Transverse colon (tissue), 4 donors: ENCODE measurements at regions of chr7 and their contacts with region 1.

Region 1: DNA sequence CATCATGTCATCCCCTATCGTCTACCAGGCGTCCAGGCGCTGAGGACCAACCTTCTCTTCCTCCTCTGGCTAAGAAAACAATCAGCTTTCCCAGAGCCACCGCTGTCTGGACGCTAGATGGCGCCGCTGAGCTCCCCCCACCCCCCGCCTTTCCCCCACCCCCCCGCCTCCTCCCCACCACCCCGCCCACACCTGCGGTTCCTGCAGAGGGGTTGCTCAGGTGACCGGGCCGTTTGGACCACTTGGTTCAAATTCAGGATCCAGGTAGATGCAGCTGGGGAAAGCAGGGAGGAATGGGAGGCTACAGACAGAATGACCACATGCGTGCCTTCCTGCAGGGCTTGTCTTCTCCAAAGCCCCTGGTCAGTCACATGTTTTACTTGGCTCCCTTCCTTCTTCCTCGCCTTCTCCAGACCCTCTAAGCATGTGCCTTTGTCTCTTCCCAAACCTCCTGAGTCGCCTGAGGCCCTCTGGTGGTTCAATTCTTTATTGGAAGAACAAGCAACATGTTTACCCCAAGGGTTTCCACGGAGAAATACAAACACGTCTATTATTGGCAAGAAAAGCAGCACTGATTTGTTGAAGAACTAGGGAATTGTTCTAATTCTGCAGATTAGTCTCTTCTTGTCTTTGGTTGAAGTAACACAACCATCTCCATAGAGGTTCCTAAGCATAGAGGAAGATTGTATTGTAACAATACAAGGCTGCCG is 24.7 kb downstream of the AOC1 start:
- DNase-seq: peak; percentile 66
- H3K4me3 ChIP-seq: no peak overlapping the region
- H3K27ac ChIP-seq: peak overlapping the region; percentile 9 to 41 (median 23)
- H3K4me1 ChIP-seq: peaks cover 0 to 12% (median 4%) of the 10 kb centered on the region in 4 donors
- H3K27me3 ChIP-seq: no peaks in the 10 kb centered on the region
- CTCF ChIP-seq: peak; percentile 39 to 73 (median 58)
- EP300 ChIP-seq: no peak
- POLR2A ChIP-seq: no peak

Region 2: DNA sequence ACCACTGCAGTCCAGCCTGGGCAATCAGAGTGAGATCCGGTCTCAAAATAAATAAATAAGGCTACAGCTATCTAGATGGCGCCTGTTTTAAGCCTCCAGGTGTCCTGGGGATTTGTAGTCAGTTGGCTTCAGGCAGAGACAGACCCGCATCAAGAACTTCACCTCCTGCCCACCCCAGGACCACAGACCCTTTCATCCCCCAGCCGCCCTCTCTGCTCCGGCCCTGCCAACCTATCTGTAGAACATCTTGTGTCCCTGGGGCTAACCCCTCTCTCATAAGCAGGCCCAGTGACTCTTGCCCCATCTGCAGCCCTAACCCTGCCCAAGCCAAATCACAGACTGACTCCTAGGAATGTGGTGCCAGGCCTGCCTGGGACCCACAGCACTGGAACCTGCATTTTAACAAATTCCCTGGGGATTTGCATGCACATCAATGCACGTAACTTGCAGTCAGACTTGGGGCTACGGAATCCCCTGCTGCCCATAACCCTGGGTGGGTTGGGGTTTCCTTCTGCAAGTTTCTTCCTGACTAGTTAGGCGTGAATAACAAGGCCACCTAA is 1866.4 kb before region 1 on chr7:
- in situ Hi-C with region 1: no loop called
- intact Hi-C with region 1: loop called (anchors 5 kb)
- DNase-seq: no peak
- H3K4me3 ChIP-seq: no peak overlapping the region
- H3K27ac ChIP-seq: no peak overlapping the region
- H3K4me1 ChIP-seq: no peaks in the 10 kb centered on the region
- H3K27me3 ChIP-seq: no peaks in the 10 kb centered on the region
- CTCF ChIP-seq: no peak
- EP300 ChIP-seq: no peak
- POLR2A ChIP-seq: no peak

Region 3: GRCh38 chr7:150778738-150779301 is 98.2 kb before region 1 on chr7:
- in situ Hi-C with region 1: loop called in 2 of 4 experiments (anchors 5 to 10 kb)
- intact Hi-C with region 1: loop called (anchors 10 kb)
- DNase-seq: peak; percentile 91
- H3K4me3 ChIP-seq: no peak overlapping the region
- H3K27ac ChIP-seq: peak overlapping the region in 3 of 4 donors; percentile 28 to 35 (median 32)
- H3K4me1 ChIP-seq: peaks cover 3 to 42% (median 12%) of the 10 kb centered on the region in 4 donors
- H3K27me3 ChIP-seq: no peaks in the 10 kb centered on the region
- CTCF ChIP-seq: peak; percentile 88 to 95 (median 89)
- EP300 ChIP-seq: no peak
- POLR2A ChIP-seq: no peak

Region 4: DNA sequence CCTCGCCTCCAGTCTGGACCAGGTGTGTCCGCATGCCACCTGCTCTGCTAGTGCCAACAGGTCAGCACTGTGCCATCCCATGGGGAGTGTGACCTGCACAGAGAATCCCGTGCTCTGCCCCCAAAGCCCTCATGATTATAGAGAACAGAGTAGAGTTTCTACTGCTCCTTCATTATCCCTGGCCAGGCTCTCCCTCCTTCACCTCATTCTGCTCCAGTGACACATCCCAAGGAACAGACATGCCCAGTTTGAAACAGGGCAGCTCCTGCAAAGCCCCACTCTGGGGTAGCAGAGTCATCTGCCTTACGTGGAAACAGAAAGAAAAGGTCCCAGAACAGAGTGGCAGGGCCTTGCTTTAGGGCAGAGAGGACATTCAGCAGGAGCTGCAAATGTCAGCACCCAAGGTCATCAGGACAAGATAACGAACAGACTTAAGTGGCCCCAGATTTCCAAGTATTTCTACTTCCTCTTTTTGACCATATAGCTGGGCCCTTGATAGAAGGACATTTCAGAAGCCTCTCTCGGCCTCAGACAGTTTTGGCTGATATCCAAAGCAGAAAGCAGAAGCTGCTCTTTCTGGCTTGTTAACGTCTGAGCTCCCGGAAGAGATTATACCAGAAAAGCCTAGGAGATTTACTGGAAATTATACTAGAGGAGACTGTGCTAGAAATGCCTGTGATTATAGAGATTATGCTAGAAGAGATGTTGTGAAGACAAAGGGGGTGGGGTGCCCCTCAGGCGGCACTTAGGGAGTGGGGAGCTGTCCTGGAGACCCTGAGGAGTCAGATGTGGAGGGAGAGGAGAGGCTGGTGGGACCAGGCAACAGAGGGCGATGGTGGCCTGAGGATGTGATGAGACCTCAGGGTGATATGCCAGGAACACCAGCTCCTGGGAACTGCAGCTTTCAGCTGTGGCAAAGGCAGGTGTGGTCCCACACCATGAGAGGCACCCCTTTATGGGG is 89.4 kb before region 1 on chr7:
- in situ Hi-C with region 1: no loop called
- intact Hi-C with region 1: loop called (anchors 10 kb)
- DNase-seq: no peak
- H3K4me3 ChIP-seq: no peak overlapping the region
- H3K27ac ChIP-seq: peak overlapping the region; percentile 83 to 89 (median 86)
- H3K4me1 ChIP-seq: peaks cover 26 to 71% (median 49%) of the 10 kb centered on the region in 4 donors
- H3K27me3 ChIP-seq: no peaks in the 10 kb centered on the region
- CTCF ChIP-seq: no peak
- EP300 ChIP-seq: no peak
- POLR2A ChIP-seq: no peak

Region 5: DNA sequence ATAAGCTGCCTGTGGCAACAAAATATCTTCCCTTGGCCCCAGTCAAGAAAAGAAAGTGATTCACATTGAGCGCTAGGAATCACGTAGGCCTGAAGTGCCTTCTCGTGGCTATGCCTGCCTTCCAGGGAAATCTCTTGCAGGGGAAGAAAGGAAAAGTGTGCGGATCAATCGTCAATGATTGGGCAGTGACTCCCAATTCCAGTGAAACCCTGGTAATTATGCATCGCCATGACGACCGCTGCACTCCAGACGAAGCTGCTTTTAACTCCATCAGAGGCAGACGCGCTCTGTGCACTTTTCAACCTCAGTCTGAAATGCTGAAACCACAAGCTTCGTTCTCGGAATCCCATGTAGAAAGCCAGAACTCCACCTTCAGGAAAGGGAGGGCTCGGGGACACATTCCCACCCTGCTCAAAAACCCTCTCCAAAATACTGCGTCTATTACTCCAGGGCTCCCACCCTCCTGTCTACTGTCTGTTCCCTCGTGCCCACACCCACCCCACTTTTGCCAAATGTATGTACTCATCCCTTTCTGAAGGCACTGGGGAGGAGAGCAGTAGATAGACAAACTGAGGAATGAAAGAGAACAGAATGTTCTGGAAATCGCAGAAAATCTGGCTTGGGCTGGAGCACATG is 1024.1 kb after region 1 on chr7:
- in situ Hi-C with region 1: no loop called
- intact Hi-C with region 1: no loop called
- DNase-seq: no peak
- H3K4me3 ChIP-seq: no peak overlapping the region
- H3K27ac ChIP-seq: no peak overlapping the region
- H3K4me1 ChIP-seq: peaks cover 3 to 14% (median 9%) of the 10 kb centered on the region in 4 donors
- H3K27me3 ChIP-seq: no peaks in the 10 kb centered on the region
- CTCF ChIP-seq: no peak
- EP300 ChIP-seq: no peak
- POLR2A ChIP-seq: no peak